Posterior cingulate gyrus (tissue), 11 donors: ENCODE measurements at regions of chr5 and their contacts with region 1.

Region 1: GRCh38 chr5:57173185-57174127 is at the start of gene GPBP1:
- DNase-seq: peak; percentile 95 to 100 (median 98)

Region 2: DNA sequence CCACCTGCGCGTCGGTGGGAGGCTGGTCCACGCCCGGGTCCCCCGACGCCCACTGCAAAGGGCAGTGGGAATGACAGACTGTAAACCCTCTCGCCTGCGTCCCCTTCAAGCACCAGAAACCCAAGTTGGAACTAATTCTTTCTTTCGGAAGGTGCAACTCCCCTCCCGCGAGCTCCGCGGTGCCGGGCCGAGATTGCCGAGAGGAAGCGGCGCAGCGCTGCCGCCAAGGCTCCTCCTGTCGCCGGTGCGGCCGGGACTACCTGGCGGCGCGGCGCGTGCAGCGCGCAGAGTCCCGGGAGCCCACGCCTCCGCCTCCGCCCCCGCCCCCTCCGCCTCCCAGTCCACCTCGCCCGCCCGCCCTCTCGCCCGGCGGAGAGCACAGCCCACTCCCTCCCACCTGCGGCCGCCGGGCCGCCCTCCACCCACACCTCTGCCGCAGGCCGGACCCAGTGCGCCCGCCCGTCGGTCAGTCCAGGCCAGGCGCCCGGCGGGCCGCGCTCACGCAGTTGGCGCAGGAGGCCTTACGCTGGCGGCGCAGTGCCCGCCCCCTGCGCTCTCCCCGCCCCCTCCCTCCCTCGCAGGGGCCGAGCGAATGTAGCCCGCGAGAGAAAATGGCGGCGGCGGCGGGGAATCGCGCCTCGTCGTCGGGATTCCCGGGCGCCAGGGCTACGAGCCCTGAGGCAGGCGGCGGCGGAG is 358.3 kb before region 1 on chr5 and contains the start of gene MAP3K1:
- intact Hi-C with region 1: loop called (anchors 10 kb)
- DNase-seq: peak; percentile 58 to 96 (median 73)

Region 3: DNA sequence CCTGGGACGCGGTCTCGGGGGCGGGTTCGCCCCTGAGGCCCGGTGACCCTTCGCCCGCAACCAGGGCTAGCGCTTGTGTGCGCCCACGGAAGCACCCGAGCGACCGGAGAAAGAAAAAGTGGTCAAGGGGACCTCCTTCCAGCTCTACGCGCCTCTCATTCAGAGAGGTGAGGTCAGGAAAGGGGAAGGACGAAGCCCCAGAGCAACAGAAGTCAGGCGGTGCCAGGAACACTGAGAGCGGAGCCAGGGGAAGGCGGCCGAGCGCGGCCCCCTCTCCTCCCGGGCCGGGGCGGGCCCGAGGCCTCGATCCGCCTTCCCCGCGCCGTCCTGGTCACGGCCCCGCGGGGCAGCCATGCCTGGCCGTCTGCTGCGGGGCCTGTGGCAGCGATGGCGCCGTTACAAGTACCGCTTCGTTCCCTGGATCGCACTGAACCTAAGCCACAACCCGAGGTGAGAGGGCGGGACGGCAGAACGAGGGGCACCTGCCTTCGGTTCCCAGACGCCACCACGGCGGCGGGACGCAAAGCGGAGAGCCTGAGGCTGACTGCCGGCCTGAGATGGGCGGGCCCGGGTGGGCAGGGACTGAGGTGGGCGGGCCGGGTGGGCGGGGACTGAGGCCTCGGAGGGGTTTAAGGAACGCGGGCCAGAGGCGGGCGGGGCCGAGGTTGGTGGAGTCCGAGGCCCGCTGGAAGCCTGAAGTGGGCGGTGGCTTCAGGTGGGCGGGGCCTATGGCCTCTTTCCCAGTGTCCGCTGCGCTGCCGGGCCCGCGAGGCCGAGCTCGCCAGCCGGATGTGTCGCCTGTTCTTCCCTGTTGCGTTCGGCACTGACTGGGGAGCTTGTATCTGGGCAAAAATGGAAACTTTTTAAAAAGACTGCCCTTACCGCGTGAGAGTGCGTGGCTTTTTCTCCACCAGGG is 263.9 kb before region 1 on chr5 and contains the start of gene SETD9:
- intact Hi-C with region 1: loop called (anchors 1 kb)
- DNase-seq: peak; percentile 91 to 99 (median 96)

Region 4: DNA sequence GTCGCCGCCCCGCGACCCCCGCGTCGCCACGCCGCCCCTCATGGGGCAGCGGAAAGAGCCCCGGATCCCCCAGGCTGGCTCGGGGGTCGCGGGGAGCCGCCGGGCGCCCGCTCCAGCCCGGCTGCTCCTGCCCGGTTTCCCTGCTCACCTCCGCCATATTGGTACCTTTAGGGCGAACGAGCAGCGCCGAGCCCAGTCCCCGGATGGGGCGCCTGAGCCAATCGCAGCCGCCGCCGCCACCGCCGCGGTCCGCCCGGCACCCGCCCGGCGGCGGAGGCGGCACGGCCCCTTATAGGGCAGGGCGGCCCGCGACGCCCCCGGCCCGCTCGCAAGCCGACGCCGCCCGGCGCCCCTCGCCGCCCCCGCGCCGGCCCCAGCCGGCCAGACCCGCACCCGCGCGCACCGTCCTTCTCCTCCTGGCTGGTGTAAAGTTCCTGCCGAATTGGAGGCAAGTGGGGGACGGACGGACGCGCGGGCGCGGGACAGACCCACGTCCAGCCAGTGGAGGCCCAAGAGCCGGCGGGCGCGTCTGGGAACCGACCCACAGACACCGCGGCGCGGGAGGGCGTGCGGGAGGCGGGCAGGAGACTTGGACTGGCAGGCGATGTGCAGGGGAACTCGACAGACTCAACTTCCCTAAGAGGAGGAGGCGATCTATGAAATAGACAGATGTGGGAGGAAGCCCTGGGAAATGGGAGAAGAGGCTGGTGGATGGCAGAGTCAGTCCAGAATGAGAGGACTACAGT is 221.3 kb before region 1 on chr5 and contains the start of gene MIER3:
- intact Hi-C with region 1: loop called (anchors 2 kb)
- DNase-seq: peak; percentile 66 to 96 (median 78)

Region 5: GRCh38 chr5:57613726-57614125 is 440.3 kb after region 1 on chr5:
- intact Hi-C with region 1: no loop called
- DNase-seq: no peak